ENCODE measurements at regions of chr11 and their contacts with region 1.

Region 1: DNA sequence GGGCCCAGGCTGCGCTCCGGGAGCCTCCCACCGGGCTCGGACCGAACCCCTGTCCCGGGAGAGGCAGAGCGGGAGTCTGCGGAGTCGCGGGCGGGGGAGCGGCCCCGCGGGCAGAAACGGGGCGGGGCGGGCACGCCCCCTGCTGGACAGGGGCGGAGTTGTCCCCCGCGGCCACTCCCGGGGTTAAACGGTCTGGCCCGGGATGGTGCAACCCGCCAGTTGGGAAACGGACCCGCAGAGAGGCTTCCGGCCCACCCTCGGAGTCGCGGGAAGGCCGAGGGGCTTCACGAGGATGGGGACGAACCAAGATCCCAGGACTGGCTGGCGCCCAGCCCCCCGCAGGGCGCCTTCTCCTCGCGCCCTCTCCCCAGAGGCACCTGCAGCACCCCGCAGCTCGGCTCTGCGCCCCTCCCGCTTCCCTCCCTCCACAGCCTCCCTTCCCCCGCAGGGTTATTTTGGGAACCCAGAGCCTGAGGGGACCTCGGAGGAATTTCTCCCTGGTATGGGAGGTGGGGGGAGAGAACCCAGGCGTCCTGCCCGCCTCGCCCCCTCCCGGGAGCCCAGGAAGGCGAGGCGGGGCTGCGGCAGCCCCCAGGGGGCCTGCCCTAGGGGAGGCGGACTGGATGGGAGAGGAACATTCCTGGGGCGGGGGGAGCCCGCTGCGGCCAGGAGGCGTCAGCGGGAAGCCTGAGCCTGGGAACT is 902 bp downstream of the RASGRP2 start:
- DNase-seq: peak; percentile 93
- H3K4me3 ChIP-seq: peak overlapping the region; percentile 49 to 50
- H3K27ac ChIP-seq: no peak overlapping the region
- H3K4me1 ChIP-seq: peaks cover 16 to 17% of the 10 kb centered on the region in 2 experiments; a peak in 2 of 4 replicates
- H3K27me3 ChIP-seq: peaks cover 8% of the 10 kb centered on the region; the same call in 1 of the 2 replicates
- CTCF ChIP-seq: peak; percentile 73
- EP300 ChIP-seq: no peak
- RAD21 ChIP-seq: peak; percentile 50

Region 2: DNA sequence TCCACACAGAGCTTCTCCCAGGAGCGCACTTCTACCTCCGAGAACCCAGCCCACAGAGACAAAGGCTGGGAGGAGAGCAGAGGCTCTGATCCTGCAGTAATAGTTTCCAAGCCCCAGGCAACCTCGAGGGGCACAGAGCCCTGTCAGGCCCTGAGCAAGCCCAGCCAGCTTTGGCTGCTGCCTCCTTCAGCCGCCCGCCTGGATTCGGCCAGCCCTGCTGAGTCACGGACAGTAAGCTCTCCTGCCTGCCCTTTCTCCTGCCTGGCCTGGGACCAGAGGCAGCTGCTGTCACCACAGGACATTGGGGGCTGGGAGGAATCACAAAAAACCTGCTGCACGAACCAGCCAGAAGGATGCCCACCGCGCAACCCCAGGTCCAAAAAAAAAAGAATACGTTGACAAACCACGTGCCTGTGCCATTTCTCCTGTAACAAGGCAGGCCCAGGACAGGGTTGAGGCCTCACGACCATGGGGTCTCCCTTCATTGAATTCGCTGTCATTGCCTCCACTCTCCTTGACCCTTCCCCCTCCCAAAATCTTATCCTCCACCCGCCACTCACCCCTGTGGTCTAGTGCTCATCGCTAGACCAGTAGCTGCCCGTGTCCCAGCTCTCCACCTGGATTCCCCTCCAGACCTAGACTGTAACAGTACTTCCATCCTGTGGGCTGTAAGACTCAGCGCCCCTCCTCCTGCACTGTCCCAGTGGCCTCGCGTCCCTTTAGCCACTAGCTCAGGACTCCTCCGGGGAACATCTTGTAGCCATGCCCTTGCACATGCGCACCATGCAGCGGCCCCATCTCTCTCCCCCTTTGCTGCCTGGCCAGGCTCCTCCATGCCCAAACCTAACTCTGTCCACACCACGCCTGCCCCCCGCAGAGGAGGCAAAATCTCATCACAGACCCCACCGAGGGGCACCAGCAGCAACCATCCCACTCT is 159.5 kb before region 1 on chr11:
- CTCF ChIA-PET with region 1: no interaction called
- POLR2A ChIA-PET with region 1: no interaction called
- DNase-seq: no peak
- H3K4me3 ChIP-seq: no peak overlapping the region
- H3K27ac ChIP-seq: no peak overlapping the region
- H3K4me1 ChIP-seq: no peaks in the 10 kb centered on the region
- H3K27me3 ChIP-seq: peaks cover 14% of the 10 kb centered on the region; the same call in 1 of the 2 replicates
- CTCF ChIP-seq: no peak
- EP300 ChIP-seq: no peak
- RAD21 ChIP-seq: no peak

Region 3: GRCh38 chr11:64694821-64695365 is 48.1 kb before region 1 on chr11:
- CTCF ChIA-PET with region 1: interaction called, 48 read pairs
- POLR2A ChIA-PET with region 1: no interaction called
- DNase-seq: peak; percentile 90
- H3K4me3 ChIP-seq: no peak overlapping the region
- H3K27ac ChIP-seq: peak overlapping the region in 1 of 2 experiments; percentile 98; a peak in 2 of 4 replicates
- H3K4me1 ChIP-seq: peaks cover 0 to 43% of the 10 kb centered on the region in 2 experiments; a peak in 2 of 4 replicates
- H3K27me3 ChIP-seq: peaks cover 36% of the 10 kb centered on the region
- CTCF ChIP-seq: no peak
- EP300 ChIP-seq: peak in 1 of 2 experiments; percentile 79; a peak in 2 of 4 replicates
- RAD21 ChIP-seq: peak; percentile 21; the same call in 1 of the 2 replicates

Region 4: GRCh38 chr11:64716473-64717267 is 26.4 kb before region 1 on chr11:
- CTCF ChIA-PET with region 1: interaction called, 20 read pairs
- POLR2A ChIA-PET with region 1: no interaction called
- DNase-seq: peak; percentile 77
- H3K4me3 ChIP-seq: no peak overlapping the region
- H3K27ac ChIP-seq: peak overlapping the region in 1 of 2 experiments; percentile 71; a peak in 2 of 4 replicates
- H3K4me1 ChIP-seq: peaks cover 0 to 39% of the 10 kb centered on the region in 2 experiments; a peak in 1 of 4 replicates
- H3K27me3 ChIP-seq: peaks cover 13% of the 10 kb centered on the region
- CTCF ChIP-seq: no peak
- EP300 ChIP-seq: no peak
- RAD21 ChIP-seq: no peak

Region 5: DNA sequence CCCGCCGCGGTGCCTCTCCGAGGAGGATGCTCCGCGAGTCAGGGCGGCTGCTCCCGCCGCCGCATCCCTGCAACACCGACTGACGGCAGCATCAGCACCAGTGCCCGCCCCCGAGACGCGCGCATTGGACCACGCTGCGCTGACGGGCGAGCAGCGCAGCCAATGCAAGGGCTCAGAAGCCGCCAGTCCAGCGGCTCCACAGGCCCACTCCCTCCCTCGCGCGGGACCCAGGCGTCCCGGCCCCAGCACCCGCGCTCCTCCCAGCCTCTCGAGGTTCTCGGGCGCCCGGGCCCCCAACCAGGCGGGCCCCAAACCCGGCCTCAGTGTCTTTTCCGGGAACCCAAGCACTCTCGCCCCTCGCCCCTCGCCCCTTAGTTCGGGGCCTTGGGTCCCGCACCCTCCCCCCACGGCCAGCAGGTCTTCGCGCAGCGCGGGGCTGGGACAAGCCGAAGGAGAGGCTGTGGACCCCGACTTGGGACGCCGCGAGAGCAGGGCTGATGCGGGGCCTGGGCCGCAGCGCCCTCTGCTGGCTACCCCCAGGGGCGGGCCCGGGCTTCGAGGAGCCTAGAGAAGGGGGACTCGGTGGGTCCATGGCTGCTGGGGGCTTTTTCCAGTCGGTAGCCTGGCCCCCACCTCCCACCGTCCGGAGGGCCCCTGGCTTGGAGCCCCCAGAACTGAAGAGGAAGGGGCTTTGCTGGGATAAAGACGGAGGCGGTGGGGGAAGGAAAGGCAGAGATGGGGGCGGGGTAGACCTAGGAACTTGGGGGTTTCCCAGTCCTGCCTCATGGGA is 19.7 kb before region 1 on chr11 and contains the start of gene NRXN2:
- CTCF ChIA-PET with region 1: interaction called, 20 read pairs
- POLR2A ChIA-PET with region 1: no interaction called
- DNase-seq: peak; percentile 97
- H3K4me3 ChIP-seq: peak within 1 kb of the TSS; percentile 67 to 93
- H3K27ac ChIP-seq: peak within 1 kb of the TSS in 1 of 2 experiments; percentile 76; a peak in 2 of 4 replicates
- H3K4me1 ChIP-seq: peaks cover 0 to 34% of the 10 kb centered on the region in 2 experiments; a peak in 1 of 4 replicates
- H3K27me3 ChIP-seq: peaks cover under 1% of the 10 kb centered on the region; the same call in 1 of the 2 replicates
- CTCF ChIP-seq: peak; percentile 98
- EP300 ChIP-seq: no peak
- RAD21 ChIP-seq: peak; percentile 72
- polyA plus RNA-seq, gene NRXN2: 0.15 TPM in 2 replicates

Region 6: GRCh38 chr11:64729851-64730382 is 13.1 kb before region 1 on chr11:
- CTCF ChIA-PET with region 1: interaction called, 37 read pairs
- POLR2A ChIA-PET with region 1: no interaction called
- DNase-seq: peak; percentile 87
- H3K4me3 ChIP-seq: no peak overlapping the region
- H3K27ac ChIP-seq: no peak overlapping the region
- H3K4me1 ChIP-seq: peaks cover 0 to 6% of the 10 kb centered on the region in 2 experiments; a peak in 1 of 4 replicates
- H3K27me3 ChIP-seq: no peaks in the 10 kb centered on the region
- CTCF ChIP-seq: no peak
- EP300 ChIP-seq: no peak
- RAD21 ChIP-seq: no peak

Region 7: DNA sequence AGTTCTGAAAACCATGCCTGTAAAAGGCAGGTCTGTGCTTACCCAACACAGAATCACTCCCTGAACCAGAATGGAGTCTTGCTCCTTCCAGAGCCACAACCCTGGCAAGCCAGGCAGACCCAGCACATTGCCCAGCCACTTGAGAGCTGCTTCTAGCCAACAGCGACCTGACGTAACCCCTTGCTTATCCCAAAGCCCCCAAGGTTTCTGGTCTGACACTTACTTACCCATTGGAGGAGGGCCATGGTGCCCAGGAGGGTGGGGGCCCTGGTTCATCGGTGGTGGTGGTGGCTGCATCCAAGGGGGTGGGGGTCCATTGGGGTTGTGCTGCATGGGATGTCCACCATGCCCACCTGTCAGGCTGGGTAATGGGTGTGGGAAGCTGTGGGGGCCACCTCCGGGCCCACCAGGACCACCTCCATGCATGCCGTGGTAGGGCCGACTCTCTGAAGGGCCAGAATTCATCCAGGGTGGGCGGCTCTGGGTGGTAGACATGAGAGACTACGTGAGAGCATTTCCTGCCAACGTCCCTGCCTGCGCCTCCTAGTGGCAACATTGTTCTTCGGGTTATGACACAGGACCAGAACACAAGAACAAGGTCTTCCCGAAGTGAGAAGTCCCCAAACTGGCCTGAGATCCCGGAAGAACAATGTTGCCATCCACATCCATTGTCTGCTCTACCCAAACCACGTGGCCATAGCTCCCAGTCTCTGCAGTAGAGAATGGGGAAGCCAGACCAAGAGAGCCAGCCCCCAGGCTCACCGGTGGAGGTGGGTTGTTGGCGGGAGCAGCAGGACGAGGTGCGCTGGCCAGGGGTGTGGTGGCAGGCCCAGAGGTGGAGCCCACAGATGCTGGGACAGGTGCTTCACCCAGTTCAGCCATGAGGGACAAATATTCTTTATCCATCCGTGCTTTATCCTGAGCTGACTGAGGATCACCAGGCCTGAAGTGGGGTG is 24.6 kb after region 1 on chr11:
- CTCF ChIA-PET with region 1: interaction called, 11 read pairs
- POLR2A ChIA-PET with region 1: no interaction called
- DNase-seq: peak; percentile 76
- H3K4me3 ChIP-seq: no peak overlapping the region; a peak in 1 of 4 replicates
- H3K27ac ChIP-seq: no peak overlapping the region; a peak in 1 of 4 replicates
- H3K4me1 ChIP-seq: peaks cover 11 to 19% of the 10 kb centered on the region in 2 experiments; a peak in 3 of 4 replicates
- H3K27me3 ChIP-seq: no peaks in the 10 kb centered on the region
- CTCF ChIP-seq: peak; percentile 83
- EP300 ChIP-seq: no peak
- RAD21 ChIP-seq: peak; percentile 45